Activated CD4-positive, alpha-beta memory T cell treated with anti-CD3 and anti-CD28 coated beads, Interleukin-2, amount 10 ng/mL, durations not matched to agents 7 days and 5 days (primary cell): ENCODE measurements at regions of chr3 and their contacts with region 1.

Region 1: DNA sequence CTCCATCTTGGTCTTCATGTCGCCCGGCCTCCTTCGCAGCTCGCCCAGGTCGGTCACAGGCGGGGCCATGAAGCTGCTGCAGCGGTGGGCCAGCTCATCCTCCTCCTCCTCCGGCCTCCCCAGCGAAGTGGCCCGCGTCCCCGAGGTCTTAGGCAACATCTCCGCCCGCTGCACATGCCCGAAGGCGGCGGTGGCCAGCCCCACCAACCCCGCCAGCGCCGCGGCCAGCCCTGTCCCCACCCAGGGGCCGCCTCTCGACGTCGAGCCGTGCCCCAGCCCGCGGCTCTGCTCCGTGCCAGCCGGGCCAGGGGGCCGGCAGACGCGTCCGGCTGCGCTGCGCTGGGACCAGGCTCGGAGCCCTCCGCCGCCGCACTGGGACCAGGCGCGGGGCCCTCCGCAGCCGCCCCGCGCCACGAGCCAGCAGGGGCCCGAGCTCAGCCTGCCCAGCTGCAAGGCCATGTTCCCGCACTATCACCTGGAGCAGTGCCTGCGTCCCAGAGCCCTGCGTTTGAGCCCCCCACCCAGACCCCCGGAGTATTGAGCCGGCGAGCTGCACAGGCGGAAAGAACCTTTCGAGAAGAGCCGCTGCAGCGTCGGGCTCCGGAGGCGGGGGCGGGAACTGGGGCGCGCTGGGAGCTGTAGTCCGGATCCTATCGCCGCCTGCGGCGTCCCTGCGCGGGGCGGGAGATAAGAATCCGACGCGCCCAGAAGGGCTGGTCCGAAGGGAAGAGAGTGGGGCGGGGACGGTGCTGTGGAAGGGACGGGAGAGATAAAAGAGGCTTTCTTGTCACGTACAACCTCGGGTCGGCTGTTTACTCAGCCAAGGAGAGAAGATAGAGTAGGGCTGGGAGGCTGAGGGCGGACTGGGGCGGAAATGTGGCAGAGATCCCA is at the start of gene CPOX:
- DNase-seq: peak; percentile 92
- H3K4me3 Mint-ChIP-seq: peak within 1 kb of the TSS; percentile 94
- H3K27ac Mint-ChIP-seq: peak within 1 kb of the TSS; percentile 87
- H3K4me1 Mint-ChIP-seq: peaks cover 49% of the 10 kb centered on the region
- H3K27me3 Mint-ChIP-seq: no peaks in the 10 kb centered on the region
- total RNA-seq, gene CPOX: 75.9 to 78.0 TPM

Region 2: DNA sequence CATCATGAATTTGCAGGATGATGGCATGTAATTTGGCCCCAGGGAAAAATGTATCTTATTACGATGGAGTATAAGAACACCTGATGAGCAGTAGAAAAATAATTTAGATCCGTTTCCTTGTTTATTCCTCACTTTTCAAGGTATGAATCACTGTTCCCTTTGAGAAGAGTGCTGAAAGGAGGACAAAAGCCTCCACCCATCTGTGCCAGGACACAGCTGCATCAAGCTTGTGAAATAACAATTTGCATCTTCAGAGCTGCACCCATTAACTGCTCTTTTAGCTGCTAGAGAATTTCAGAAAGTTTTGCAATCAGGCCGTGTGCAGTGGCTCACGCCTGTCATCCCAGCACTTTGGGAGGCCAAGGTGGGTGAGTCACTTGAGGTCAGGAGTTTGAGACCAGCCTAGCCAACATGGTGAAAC is 80.2 kb before region 1 on chr3:
- CTCF ChIA-PET with region 1: interaction called, 4 read pairs
- POLR2A ChIA-PET with region 1: interaction called, 101 read pairs
- DNase-seq: no peak
- H3K4me3 Mint-ChIP-seq: no peak overlapping the region
- H3K27ac Mint-ChIP-seq: no peak overlapping the region
- H3K4me1 Mint-ChIP-seq: peaks cover 75% of the 10 kb centered on the region
- H3K27me3 Mint-ChIP-seq: no peaks in the 10 kb centered on the region

Region 3: GRCh38 chr3:98531622-98532274 is 61.5 kb before region 1 on chr3 and contains the start of gene GPR15:
- CTCF ChIA-PET with region 1: interaction called, 6 read pairs
- POLR2A ChIA-PET with region 1: interaction called, 41 read pairs
- DNase-seq: no peak
- H3K4me3 Mint-ChIP-seq: peak within 1 kb of the TSS; percentile 81
- H3K27ac Mint-ChIP-seq: peak within 1 kb of the TSS; percentile 84
- H3K4me1 Mint-ChIP-seq: peaks cover 64% of the 10 kb centered on the region
- H3K27me3 Mint-ChIP-seq: no peaks in the 10 kb centered on the region
- total RNA-seq, gene GPR15: 111 TPM

Region 4: GRCh38 chr3:98556164-98557130 is 36.8 kb before region 1 on chr3:
- CTCF ChIA-PET with region 1: no interaction called
- POLR2A ChIA-PET with region 1: interaction called, 94 read pairs
- DNase-seq: peak; percentile 88
- H3K4me3 Mint-ChIP-seq: peak overlapping the region; percentile 82
- H3K27ac Mint-ChIP-seq: peak overlapping the region; percentile 100
- H3K4me1 Mint-ChIP-seq: peaks cover 87% of the 10 kb centered on the region
- H3K27me3 Mint-ChIP-seq: no peaks in the 10 kb centered on the region

Region 5: DNA sequence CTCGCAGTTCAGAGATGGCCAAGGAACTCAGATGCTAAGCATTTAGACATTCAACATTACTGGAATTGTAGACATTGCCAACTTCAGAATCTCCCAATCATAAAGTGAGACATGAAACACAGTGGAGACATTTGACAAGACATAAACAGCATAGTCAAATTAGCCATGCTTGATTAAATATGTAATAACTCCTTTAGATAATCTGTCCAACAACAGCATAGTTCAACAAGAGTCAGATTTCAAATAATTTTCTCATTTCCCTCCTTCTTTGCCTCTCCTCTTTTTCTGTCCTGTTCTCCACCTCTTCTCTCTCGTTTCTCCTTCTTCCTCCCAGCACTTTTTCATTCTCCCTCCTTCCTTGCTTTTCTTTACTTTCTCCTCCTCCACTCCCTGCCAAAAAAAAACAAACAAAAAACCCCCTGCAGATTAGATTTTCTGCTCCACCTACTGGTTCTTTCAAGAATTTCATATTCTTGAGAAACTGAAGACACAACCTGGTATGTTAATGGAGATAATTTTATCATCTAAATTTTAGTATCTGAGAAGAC is 20.0 kb before region 1 on chr3:
- CTCF ChIA-PET with region 1: interaction called, 3 read pairs
- POLR2A ChIA-PET with region 1: interaction called, 24 read pairs
- DNase-seq: no peak
- H3K4me3 Mint-ChIP-seq: peak overlapping the region; percentile 44
- H3K27ac Mint-ChIP-seq: peak overlapping the region; percentile 75
- H3K4me1 Mint-ChIP-seq: peaks cover 60% of the 10 kb centered on the region
- H3K27me3 Mint-ChIP-seq: no peaks in the 10 kb centered on the region